ENCODE measurements at regions of chr18 and their contacts with region 1.

Region 1: GRCh38 chr18:46281185-46282176 is 177.3 kb downstream of the HAUS1 start:
- DNase-seq: peak; percentile 52
- H3K4me3 ChIP-seq: no peak overlapping the region
- H3K27ac ChIP-seq: no peak overlapping the region
- H3K4me1 ChIP-seq: peaks cover 17% of the 10 kb centered on the region
- H3K27me3 ChIP-seq: no peaks in the 10 kb centered on the region
- CTCF ChIP-seq: peak; percentile 96

Region 2: DNA sequence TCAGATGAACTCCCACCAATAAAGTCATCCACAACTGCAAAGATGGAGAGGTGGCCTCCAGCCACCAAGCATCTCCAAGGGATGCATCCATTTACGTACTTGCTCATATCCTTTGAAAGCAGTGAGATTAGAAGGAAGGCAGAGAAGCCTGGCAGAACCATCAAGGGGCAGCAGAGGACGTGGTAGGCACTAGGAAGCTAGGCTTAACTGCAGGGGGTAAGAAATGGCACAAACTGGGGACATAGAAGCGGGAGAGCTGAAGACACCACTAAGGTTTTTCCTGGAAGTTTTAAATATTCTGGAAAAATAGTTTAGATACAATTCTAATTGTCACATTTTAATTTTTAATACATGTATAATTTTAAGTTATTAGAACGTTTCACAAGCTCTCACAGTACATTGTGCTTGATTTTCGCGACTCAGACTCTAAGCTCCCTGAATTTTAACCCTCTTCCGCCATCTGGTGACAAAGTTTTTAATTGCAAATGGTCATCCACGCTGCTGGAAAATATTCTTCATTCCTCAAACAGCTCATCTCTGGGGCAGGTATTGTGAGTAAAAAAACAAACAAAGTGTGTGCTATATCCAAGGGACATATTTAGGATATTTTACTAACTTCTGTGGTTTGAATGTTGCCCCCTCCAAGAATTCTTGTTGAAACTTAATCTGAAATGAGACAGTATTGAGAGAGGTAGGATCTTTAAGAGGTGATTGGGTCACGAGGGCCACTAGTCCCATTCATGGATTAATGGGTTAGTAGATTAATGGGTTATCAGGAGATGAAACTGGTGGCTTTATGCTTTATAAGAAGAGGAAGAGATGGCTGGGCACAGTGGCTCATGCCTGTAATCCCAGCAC is 207.8 kb before region 1 on chr18:
- intact Hi-C with region 1: no loop called
- DNase-seq: no peak
- H3K4me3 ChIP-seq: peak overlapping the region; percentile 76
- H3K27ac ChIP-seq: no peak overlapping the region
- H3K4me1 ChIP-seq: peaks cover 45% of the 10 kb centered on the region
- H3K27me3 ChIP-seq: no peaks in the 10 kb centered on the region
- CTCF ChIP-seq: peak; percentile 71

Region 3: GRCh38 chr18:46343931-46344372 is 62.5 kb after region 1 on chr18:
- intact Hi-C with region 1: no loop called
- DNase-seq: peak; percentile 40
- H3K4me3 ChIP-seq: no peak overlapping the region
- H3K27ac ChIP-seq: peak overlapping the region; percentile 73
- H3K4me1 ChIP-seq: peaks cover 56% of the 10 kb centered on the region
- H3K27me3 ChIP-seq: no peaks in the 10 kb centered on the region
- CTCF ChIP-seq: no peak

Region 4: GRCh38 chr18:46481048-46481846 is 199.8 kb after region 1 on chr18:
- intact Hi-C with region 1: loop called (anchors 10 kb)
- DNase-seq: peak; percentile 38
- H3K4me3 ChIP-seq: no peak overlapping the region
- H3K27ac ChIP-seq: no peak overlapping the region
- H3K4me1 ChIP-seq: peaks cover 6% of the 10 kb centered on the region
- H3K27me3 ChIP-seq: no peaks in the 10 kb centered on the region
- CTCF ChIP-seq: peak; percentile 81

Region 5: DNA sequence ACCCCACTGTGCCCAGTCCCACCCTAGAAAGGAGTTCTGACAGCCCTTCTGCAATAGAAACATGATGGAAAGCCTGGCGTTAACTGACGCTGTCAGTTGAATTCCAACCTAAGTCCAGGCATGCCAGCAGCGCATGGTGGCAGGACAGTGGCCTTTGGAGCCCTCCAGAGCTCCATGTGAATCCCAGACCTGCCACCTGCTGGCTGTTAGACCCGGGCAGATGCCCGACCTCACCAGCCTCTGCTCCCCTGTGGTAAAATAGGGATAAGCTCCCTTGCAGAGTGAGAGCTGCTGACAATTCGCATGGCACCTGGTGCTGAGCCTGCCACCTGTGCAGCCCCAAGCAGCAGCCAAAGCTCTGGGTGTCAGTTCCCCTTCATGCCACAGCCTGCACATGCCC is 237.0 kb after region 1 on chr18:
- intact Hi-C with region 1: loop called (anchors 10 kb)
- DNase-seq: peak; percentile 38
- H3K4me3 ChIP-seq: no peak overlapping the region
- H3K27ac ChIP-seq: no peak overlapping the region
- H3K4me1 ChIP-seq: no peaks in the 10 kb centered on the region
- H3K27me3 ChIP-seq: no peaks in the 10 kb centered on the region
- CTCF ChIP-seq: peak; percentile 72

Region 6: DNA sequence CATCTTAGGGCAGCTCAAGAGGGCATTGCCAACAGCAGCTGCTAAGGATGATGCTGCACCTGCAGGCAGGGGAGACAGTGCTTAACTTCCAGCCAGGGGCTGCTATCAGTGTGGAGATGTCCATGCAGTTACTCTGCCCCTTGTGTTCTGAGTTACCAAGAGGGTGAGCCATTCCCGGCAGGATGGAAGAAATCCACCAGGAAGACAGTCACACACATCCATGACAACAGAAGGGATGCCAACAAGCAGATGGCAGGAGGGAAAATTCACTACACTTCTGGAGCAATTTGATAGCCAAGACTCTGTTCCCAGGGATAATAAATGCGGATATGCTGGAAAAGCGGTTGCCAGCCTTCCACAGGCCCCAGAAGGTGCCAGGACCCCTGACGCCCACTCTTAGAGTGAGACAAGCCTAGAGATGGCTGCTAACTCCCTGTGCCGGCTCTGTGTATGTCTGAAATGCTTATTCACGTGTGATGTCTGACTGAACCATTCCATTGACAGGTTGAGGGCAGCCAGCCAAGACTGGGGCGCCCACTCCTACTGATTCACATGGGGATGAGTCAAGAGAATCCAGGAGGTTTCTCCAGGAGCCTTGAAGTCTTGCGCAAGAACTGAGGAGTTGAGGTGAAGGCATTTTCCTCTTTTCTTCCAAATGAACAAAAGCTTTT is 351.1 kb after region 1 on chr18:
- intact Hi-C with region 1: loop called (anchors 10 kb)
- DNase-seq: no peak
- H3K4me3 ChIP-seq: no peak overlapping the region
- H3K27ac ChIP-seq: no peak overlapping the region
- H3K4me1 ChIP-seq: no peaks in the 10 kb centered on the region
- H3K27me3 ChIP-seq: peaks cover 22% of the 10 kb centered on the region
- CTCF ChIP-seq: no peak